Calu3 (cell line): ENCODE measurements at regions of chr17 and their contacts with region 1.

Region 1: GRCh38 chr17:38853292-38854219 is at the start of gene RPL23:
- DNase-seq: peak; percentile 100
- H3K4me3 Mint-ChIP-seq: peak within 1 kb of the TSS; percentile 93
- H3K27ac Mint-ChIP-seq: peak within 1 kb of the TSS; percentile 100
- H3K4me1 Mint-ChIP-seq: peaks cover 60% of the 10 kb centered on the region
- H3K27me3 Mint-ChIP-seq: no peaks in the 10 kb centered on the region
- CTCF ChIP-seq: no peak
- total RNA-seq, gene RPL23: 3,443 and 3,829 TPM in 2 replicates

Region 2: DNA sequence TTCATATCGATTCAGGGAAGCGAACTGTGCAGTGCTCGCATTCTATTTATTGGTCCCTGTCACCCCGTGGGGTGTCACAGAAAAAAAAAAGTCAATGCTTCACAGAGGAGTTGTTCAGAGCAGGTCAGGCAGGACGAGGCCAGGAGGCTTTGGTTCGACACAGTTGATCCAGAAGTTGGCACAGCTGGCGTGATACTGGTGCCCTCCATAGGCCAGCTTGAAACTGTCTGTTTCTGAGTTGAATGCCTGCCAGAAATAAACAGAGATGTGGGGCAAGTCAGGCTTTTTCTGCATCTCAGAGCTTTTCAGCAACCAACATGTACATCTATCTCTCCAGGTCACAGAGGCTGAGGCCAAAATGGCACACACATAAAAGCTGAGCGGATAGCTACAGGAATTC is 1334.7 kb before region 1 on chr17:
- CTCF ChIA-PET with region 1: no interaction called
- intact Hi-C with region 1: no loop called
- DNase-seq: no peak
- H3K4me3 Mint-ChIP-seq: no peak overlapping the region
- H3K27ac Mint-ChIP-seq: no peak overlapping the region
- H3K4me1 Mint-ChIP-seq: no peaks in the 10 kb centered on the region
- H3K27me3 Mint-ChIP-seq: no peaks in the 10 kb centered on the region
- CTCF ChIP-seq: no peak

Region 3: DNA sequence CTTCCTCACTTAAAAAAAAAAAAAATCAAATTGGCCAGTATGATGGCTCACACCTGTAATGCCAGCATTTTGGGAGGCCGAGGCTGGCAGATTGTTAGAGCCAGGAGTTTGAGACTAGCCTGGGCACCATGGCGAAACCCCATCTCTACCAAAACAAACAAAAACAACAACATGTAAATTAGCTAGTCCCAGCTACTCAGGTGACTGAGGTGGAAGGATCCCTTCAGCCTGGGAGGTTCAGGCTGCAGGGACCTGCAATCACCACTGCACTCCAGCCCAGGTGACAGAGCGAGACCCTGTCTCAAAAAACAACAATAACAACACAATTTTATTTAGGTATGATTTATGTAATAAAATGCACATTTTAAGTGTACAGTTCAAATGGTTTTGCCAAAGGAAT is 172.5 kb before region 1 on chr17:
- CTCF ChIA-PET with region 1: interaction called, 10 read pairs
- intact Hi-C with region 1: loop called (anchors 10 kb)
- DNase-seq: no peak
- H3K4me3 Mint-ChIP-seq: no peak overlapping the region
- H3K27ac Mint-ChIP-seq: no peak overlapping the region
- H3K4me1 Mint-ChIP-seq: peaks cover 14% of the 10 kb centered on the region
- H3K27me3 Mint-ChIP-seq: peaks cover 37% of the 10 kb centered on the region
- CTCF ChIP-seq: no peak

Region 4: DNA sequence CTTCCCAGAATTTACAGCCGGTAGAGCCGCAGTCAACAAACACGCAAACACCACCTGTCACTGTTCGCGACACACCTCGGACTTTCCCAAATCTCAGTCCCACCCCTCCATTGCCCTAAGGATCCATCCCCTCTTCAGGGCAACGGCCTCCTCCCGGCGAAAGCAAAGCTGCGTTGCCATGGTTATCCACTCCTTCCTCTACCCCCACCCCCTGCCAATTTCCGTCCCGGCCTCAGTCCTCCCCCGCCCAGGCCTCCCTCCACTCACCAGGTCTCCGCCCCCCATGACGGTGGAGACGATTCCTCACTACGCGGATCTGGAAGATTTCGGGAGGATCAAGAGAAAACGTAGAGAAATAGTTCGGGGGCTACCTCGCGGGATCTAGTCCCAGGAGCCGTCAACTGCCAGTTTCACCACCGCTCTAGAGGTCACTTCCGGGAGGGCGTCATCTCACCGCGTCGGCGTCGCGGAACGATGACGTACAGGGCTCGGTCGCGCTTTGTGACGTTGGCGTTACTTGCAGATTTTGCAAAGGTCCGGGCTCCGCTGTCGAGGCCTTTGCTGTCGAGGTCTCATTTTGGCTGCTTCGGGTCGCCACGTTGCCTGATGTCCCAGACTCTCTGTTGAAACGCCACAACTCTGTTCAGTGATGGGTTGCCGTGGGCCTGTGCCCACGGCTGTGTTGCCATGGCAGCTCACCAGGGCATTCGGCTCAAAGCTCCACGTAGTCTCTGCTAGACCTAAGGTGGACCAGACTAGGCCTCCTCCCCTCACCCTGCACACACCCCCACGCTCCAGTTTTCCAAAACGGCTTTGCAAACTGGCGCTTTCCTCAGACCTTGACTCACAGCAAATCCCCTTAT is 28.4 kb before region 1 on chr17 and contains the start of gene CWC25:
- CTCF ChIA-PET with region 1: interaction called, 13 read pairs
- intact Hi-C with region 1: no loop called
- DNase-seq: peak; percentile 100
- H3K4me3 Mint-ChIP-seq: peak within 1 kb of the TSS; percentile 87
- H3K27ac Mint-ChIP-seq: peak within 1 kb of the TSS; percentile 100
- H3K4me1 Mint-ChIP-seq: peaks cover 37% of the 10 kb centered on the region
- H3K27me3 Mint-ChIP-seq: no peaks in the 10 kb centered on the region
- CTCF ChIP-seq: no peak
- total RNA-seq, gene CWC25: 77.8 and 78.9 TPM in 2 replicates

Region 5: GRCh38 chr17:38912221-38912813 is 58.8 kb after region 1 on chr17:
- CTCF ChIA-PET with region 1: no interaction called
- intact Hi-C with region 1: no loop called
- DNase-seq: no peak
- H3K4me3 Mint-ChIP-seq: no peak overlapping the region
- H3K27ac Mint-ChIP-seq: no peak overlapping the region
- H3K4me1 Mint-ChIP-seq: peaks cover 8% of the 10 kb centered on the region
- H3K27me3 Mint-ChIP-seq: no peaks in the 10 kb centered on the region
- CTCF ChIP-seq: no peak